HEK293 (cell line): ENCODE measurements at regions of chr16 and their contacts with region 1.

Region 1: DNA sequence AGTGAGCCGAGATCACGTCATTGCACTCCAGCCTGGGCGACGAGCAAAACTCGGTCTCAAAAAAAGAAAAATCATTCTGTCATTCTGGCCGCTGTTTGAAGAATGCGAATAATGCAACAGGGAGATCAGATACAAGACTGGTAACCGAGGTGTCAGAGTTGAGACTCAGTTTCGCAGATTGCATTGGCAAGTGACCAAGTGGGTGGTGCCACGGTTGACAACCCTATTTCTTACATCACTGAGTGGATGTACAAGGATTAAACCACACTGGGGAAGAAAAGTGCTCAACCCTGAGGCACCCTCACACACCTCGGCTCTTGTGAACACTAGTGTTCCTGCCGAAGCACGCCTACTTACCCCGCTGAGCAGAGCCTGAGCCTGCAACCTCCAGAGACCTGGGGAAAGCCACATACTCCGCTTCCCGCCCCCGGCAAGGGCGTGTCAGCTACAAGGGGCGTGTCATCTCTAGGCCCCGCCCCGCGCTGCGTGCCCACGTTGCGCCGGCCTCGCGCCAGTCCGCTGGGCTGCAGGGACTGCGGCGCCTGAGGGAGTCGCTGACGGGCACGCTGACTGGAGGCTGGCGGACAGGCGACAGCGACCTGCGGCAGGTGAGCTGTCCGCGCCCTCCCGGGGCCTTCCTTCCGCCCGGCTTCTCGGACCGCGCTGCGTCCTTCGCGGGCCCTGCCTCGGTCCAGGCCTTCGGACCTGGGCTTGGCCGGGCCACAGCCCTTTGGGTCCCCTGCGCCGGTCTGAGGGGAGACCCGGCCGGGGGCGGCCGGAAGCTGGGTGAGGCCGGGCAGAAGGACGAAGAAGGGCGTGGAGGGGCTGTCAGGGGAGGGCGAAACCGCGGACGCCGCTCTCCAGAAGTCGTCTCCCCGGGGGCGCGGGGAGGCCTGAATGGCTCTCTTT is at the start of gene HMOX2:
- H3K4me3 ChIP-seq: peak within 1 kb of the TSS; percentile 92
- H3K27ac ChIP-seq: peak within 1 kb of the TSS; percentile 53; the same call in 1 of the 2 replicates
- H3K4me1 ChIP-seq: 0 out of 2 replicates have a peak, but pooled peaks cover 2% of the 10 kb centered on the region
- CTCF ChIP-seq: peak; percentile 94

Region 2: DNA sequence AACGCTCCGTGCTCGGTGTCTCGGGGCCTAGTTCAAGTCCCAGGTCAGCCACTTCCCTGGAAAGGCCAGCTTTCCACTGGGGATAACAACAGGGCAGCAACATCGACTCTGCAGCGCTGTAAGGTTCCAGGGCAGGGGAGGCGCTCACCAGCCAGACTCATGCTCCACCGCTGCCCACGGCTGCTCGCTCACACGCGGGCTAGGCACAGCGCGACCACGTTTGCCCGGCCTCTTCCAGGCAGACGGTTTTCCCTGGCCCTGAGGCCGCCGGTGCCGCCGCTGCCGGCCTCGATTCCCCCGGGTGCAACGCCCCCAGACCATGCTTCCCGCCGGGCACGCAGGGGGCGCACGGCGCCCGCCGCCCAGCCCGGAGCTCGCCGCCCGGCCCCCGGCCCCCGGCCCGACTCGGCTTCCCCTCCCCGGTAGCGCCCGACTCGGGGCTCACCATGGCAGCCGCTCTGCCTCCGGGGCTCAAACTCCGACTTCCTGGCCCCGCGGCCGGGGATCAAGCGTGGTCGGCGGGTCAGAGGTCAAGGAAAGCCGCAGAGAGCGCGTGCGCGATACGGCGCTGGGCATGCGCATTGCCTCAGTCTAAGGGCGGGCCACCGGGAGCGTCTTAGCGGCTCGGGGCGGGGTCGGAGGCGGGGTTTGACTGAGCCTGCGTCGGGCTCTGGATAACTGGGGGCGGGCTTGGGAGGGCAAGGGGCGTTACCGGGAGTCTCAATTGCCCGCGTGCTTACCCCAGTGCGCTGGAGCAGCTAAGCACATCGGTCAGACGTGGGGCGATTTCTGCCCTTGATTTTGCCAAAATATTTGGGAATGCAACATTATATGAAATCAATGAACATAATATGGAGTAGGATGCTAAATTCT is 125.1 kb before region 1 on chr16 and contains the start of gene PAM16:
- CTCF ChIA-PET with region 1: no interaction called
- POLR2A ChIA-PET with region 1: no interaction called
- H3K4me3 ChIP-seq: peak within 1 kb of the TSS; percentile 95
- H3K27ac ChIP-seq: peak within 1 kb of the TSS; percentile 85
- H3K4me1 ChIP-seq: peaks cover 7% of the 10 kb centered on the region; the same call in 1 of the 2 replicates
- CTCF ChIP-seq: peak; percentile 66

Region 3: DNA sequence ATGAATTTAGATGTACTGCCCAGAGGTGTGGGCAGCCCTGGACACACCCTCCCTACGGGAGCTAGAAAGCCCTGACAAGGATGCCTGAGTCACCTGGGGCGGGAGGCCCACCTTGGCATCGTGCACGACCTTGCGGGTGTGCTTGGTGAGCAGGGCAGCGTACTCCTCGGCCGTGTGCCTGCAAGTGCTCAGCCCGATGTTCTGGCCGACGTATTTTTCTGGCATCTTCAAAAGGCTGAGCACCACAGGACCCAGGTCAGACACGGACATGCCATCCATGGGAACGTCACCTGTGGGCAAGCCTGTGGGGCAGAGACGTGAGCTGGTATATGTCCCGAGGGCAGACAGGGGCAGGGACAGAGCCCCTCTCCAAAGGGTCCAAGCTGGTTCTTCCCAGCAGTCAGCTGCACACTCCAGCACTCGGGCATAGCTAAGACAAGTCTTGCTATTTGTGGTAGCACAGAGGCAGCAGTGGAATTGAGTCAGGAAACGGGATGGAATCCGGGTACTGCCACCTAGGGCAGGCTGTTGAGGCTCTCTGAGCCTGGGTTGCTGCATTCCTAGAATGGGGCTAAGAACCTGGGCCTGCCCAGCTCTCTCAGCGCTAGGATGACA is 12.5 kb before region 1 on chr16:
- CTCF ChIA-PET with region 1: interaction called, 3 read pairs
- POLR2A ChIA-PET with region 1: interaction called, 11 read pairs
- H3K4me3 ChIP-seq: no peak overlapping the region
- H3K27ac ChIP-seq: no peak overlapping the region
- H3K4me1 ChIP-seq: no peaks in the 10 kb centered on the region
- CTCF ChIP-seq: no peak

Region 4: DNA sequence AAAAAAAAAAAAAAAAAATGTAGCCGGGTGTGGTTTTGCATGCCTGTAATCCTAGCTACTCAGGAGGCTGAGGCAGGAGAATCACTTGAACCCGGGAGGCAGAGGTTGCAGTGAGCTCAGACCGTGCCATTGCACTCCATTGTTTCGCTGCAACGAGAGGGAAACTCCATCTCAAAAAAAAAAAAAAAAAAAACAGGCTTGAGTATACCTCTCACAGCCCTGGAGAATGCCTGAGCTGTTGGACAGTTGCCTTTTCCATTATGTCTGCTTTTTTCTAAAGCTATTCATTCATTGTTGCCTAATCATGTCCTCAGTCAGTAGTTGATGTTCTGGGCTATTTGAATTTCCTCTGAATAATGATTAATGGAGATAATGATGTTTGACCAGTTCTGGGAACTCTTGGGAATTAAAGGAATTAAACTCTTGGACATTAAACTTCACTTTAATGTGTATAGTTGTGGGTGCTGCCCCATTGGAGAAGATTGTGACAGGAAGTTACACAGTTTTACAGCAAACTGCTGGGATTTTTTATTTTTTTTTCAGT is 11.9 kb after region 1 on chr16:
- CTCF ChIA-PET with region 1: interaction called, 5 read pairs
- POLR2A ChIA-PET with region 1: interaction called, 10 read pairs
- H3K4me3 ChIP-seq: no peak overlapping the region
- H3K27ac ChIP-seq: no peak overlapping the region
- H3K4me1 ChIP-seq: 0 out of 2 replicates have a peak, but pooled peaks cover 2% of the 10 kb centered on the region
- CTCF ChIP-seq: no peak